ENCODE measurements at regions of chr17 and their contacts with region 1.

Region 1: DNA sequence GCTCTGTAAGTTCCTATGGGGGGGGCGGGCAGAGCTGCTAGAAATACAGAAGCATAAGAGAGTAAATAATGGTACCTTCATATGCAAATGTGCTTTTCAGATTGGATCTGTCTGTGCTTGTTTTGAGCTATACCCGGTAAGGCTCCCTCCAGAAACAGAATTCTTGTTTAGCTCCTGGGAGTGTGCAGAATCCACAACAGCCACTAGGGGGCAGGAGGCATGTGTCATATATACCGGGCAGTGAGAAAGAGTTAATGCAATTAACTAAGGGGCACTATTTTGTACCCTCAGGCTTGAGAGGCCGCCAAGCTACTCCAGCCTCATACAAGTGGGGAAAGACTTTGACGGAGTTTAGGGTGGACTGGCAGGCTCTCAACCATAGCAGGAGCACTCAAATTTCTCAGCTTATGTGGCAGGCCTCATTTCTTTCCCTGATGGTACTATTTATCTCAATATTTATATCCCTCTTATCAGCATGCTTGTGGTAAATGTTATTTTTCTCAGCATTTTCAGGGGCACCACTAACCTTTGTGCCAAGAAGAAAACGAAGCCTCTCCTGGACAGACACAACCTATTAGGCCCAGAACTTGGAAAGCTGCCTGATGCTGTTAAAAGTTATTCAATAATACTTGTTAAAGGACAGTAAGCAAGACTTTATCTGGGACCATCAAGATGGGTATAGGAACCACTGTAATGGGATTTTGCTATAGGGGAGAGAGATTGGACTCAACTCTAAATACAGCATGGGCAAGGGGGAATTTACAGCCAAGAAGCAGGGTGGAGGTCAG is 10.7 kb upstream of the CENPV start:
- DNase-seq: peak; percentile 83 to 84
- ATAC-seq: peak; percentile 96 to 97
- H3K4me3 ChIP-seq: no peak overlapping the region
- H3K27ac ChIP-seq: peak overlapping the region in 1 of 2 experiments; percentile 38; a peak in 3 of 6 replicates
- H3K4me1 ChIP-seq: peaks cover 7% of the 10 kb centered on the region; the same call in 1 of the 3 replicates
- CTCF ChIP-seq: peak; percentile 97
- EP300 ChIP-seq: no peak
- POLR2A ChIP-seq: no peak
- RAD21 ChIP-seq: peak; percentile 86 to 87

Region 2: DNA sequence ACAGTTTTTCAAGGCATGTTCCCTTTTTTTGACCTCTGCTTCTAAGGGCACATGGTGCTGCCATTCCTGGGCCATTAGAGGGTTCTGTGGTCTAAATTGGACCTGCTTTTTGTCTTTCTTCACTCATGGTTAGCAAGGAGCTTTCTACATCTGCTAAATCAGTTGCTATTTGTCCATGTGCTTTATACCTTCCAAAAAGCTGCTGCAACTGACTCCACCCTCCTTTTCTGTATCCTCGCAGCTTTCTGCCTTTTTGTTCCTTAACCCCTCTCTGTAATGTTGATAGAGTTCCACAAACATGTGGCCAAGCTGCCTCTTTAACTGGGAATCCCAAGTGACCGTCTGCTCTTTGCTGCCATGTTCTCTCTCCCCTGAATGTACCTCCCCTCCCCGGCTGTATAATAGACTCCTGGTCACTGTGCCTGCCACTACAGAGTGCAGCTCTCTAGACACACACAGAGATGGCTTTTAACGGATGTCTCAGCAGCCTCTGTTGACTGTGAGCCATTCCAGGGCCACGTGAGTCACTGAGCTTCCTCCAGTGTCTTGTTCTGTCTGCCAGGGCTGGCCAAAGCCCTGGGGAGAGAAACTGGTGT is 965.1 kb before region 1 on chr17:
- CTCF ChIA-PET with region 1: no interaction called
- POLR2A ChIA-PET with region 1: no interaction called
- DNase-seq: peak in 1 of 2 experiments; percentile 21
- ATAC-seq: peak; percentile 68 to 69; a peak in 5 of 6 replicates
- H3K4me3 ChIP-seq: no peak overlapping the region
- H3K27ac ChIP-seq: no peak overlapping the region
- H3K4me1 ChIP-seq: peaks cover 10% of the 10 kb centered on the region; the same call in 1 of the 3 replicates
- CTCF ChIP-seq: no peak
- EP300 ChIP-seq: no peak
- POLR2A ChIP-seq: no peak
- RAD21 ChIP-seq: no peak

Region 3: DNA sequence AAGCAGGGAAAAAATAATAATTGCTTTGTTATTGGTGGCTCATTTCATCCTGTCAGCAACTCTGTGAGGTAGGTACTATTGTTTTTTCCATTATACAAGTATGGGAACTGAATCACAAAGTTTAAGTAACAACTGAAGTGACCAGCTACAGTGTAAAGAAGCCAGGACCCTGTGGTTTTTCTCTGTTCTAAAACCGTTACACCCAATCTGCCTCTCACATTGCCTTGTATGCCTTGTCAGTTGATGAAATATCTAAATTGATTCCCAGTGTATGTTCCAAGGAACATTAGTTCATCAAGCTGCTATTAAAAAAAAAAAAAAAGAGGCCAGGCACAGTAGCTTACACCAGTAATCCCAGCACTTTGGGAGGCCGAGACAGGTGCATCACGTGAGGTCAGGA is 141.5 kb before region 1 on chr17:
- CTCF ChIA-PET with region 1: interaction called, 13 read pairs
- POLR2A ChIA-PET with region 1: no interaction called
- DNase-seq: no peak
- ATAC-seq: no peak
- H3K4me3 ChIP-seq: no peak overlapping the region
- H3K27ac ChIP-seq: peak overlapping the region in 1 of 2 experiments; percentile 56; a peak in 3 of 6 replicates
- H3K4me1 ChIP-seq: peaks cover 19% of the 10 kb centered on the region
- CTCF ChIP-seq: no peak
- EP300 ChIP-seq: no peak
- POLR2A ChIP-seq: no peak
- RAD21 ChIP-seq: no peak

Region 4: GRCh38 chr17:16304830-16305229 is 59.1 kb before region 1 on chr17:
- CTCF ChIA-PET with region 1: interaction called, 55 read pairs
- POLR2A ChIA-PET with region 1: no interaction called
- DNase-seq: peak in 1 of 2 experiments; percentile 78
- ATAC-seq: peak; percentile 93 to 95
- H3K4me3 ChIP-seq: no peak overlapping the region
- H3K27ac ChIP-seq: peak overlapping the region; percentile 20 to 58; a peak in 4 of 6 replicates
- H3K4me1 ChIP-seq: peaks cover 18% of the 10 kb centered on the region
- CTCF ChIP-seq: peak; percentile 72
- EP300 ChIP-seq: no peak
- POLR2A ChIP-seq: no peak
- RAD21 ChIP-seq: peak; percentile 80 to 83

Region 5: GRCh38 chr17:16342979-16343378 is 21.0 kb before region 1 on chr17:
- CTCF ChIA-PET with region 1: interaction called, 163 read pairs
- POLR2A ChIA-PET with region 1: no interaction called
- DNase-seq: no peak
- ATAC-seq: no peak
- H3K4me3 ChIP-seq: no peak overlapping the region
- H3K27ac ChIP-seq: no peak overlapping the region
- H3K4me1 ChIP-seq: peaks cover 13% of the 10 kb centered on the region
- CTCF ChIP-seq: no peak
- EP300 ChIP-seq: no peak
- POLR2A ChIP-seq: no peak
- RAD21 ChIP-seq: no peak

Region 6: GRCh38 chr17:16407911-16408588 is 44.1 kb after region 1 on chr17:
- CTCF ChIA-PET with region 1: interaction called, 11 read pairs
- POLR2A ChIA-PET with region 1: no interaction called
- DNase-seq: peak in 1 of 2 experiments; percentile 60
- ATAC-seq: peak; percentile 56 to 69
- H3K4me3 ChIP-seq: no peak overlapping the region
- H3K27ac ChIP-seq: peak overlapping the region in 1 of 2 experiments; percentile 87; a peak in 4 of 6 replicates
- H3K4me1 ChIP-seq: peaks cover 19% of the 10 kb centered on the region
- CTCF ChIP-seq: no peak
- EP300 ChIP-seq: no peak
- POLR2A ChIP-seq: no peak
- RAD21 ChIP-seq: no peak

Region 7: DNA sequence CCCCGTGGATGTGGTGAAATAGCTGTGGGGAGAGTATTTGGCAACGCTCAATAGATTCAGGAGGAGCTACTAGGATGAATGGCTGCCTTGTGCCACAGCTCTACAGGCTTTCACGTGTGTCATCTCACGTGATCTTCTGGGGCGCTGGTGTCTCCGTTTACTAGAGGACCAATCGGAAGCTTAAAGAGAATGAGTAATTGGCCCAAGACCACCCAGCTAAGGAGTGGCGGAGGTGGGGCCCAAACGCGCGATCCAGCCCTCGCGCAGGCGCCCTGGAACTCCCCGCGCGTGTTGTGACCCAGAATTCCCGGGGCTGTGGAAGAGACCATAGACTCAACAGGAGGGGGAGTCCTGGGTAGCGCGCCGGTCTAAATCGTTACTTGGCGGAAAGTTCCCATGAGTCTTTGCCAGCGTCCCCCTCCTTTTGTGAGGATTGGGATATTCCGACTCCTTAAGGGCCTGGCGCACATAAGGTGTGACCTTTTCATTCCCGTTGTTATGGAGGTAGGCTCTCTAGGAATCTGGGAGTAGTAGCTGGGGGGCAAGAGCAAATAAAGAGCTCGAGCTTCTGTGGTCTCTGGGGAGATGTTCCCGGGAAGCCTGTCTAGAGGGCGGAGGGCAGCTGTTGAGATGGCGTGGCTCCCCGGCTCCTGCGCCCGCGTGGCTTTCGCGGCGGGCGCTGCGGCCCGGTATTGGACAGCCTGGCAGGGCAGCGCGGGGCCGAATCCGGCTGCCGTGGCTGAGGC is 74.8 kb after region 1 on chr17:
- CTCF ChIA-PET with region 1: interaction called, 20 read pairs
- POLR2A ChIA-PET with region 1: interaction called, 15 read pairs
- DNase-seq: peak; percentile 100
- ATAC-seq: peak; percentile 84 to 89
- H3K4me3 ChIP-seq: peak overlapping the region; percentile 75
- H3K27ac ChIP-seq: peak overlapping the region; percentile 90 to 99
- H3K4me1 ChIP-seq: peaks cover 37% of the 10 kb centered on the region
- CTCF ChIP-seq: no peak
- EP300 ChIP-seq: no peak
- POLR2A ChIP-seq: peak; percentile 96
- RAD21 ChIP-seq: no peak; a peak in 1 of 5 replicates

Region 8: DNA sequence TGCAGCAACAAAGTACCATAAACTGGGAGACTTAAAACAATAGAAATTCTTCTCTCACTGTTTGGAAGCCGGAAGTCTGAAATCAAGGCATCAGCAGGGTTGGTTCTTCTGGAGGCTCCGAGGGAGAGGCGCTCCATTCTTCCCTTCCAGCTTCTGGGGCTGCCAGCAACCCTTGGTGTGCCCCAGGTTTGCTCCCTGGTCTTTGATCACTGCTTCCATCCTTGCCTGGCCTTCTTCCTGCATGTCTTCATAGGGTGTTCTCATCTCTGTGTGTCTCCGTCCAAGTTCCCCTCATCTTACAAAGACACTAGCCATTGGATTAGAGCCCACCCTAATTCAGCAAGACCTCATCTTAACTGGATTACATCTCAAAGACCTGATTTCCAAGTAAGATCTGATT is 163.4 kb after region 1 on chr17:
- CTCF ChIA-PET with region 1: interaction called, 76 read pairs
- POLR2A ChIA-PET with region 1: no interaction called
- DNase-seq: no peak
- ATAC-seq: no peak
- H3K4me3 ChIP-seq: no peak overlapping the region
- H3K27ac ChIP-seq: no peak overlapping the region
- H3K4me1 ChIP-seq: no peaks in the 10 kb centered on the region
- CTCF ChIP-seq: no peak
- EP300 ChIP-seq: no peak
- POLR2A ChIP-seq: no peak
- RAD21 ChIP-seq: no peak

Region 9: DNA sequence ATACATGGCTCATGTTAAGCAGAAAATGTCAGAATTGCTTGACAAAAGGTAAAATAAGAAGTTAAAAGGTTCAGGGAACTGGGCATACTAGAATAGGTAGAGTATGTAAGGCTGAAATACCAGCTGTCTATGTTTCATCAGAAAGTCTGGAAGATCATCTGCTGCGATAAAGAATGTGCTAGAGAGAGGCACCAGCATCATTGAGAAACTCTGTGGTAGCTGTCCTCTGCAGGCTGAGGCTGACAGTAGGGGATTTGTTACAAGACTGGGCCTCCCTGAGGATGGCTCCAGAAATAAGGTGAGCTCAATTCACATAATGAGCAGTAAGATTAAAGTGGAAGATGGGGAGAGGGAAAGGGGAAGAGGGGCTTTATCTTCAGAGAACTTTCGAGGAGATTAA is 209.5 kb after region 1 on chr17:
- CTCF ChIA-PET with region 1: no interaction called
- POLR2A ChIA-PET with region 1: no interaction called
- DNase-seq: no peak
- ATAC-seq: no peak
- H3K4me3 ChIP-seq: no peak overlapping the region
- H3K27ac ChIP-seq: no peak overlapping the region
- H3K4me1 ChIP-seq: no peaks in the 10 kb centered on the region
- CTCF ChIP-seq: no peak
- EP300 ChIP-seq: no peak
- POLR2A ChIP-seq: no peak
- RAD21 ChIP-seq: no peak

Measured in A549 (cell line).